ENCODE measurements at regions of chr17 and their contacts with region 1.

Region 1: GRCh38 chr17:17496189-17497064 is at the start of gene RASD1:
- DNase-seq: peak; percentile 96
- H3K4me3 ChIP-seq: peak within 1 kb of the TSS; percentile 67 to 77 (median 70)
- H3K27ac ChIP-seq: peak within 1 kb of the TSS; percentile 77 to 89 (median 85)
- H3K4me1 ChIP-seq: peaks cover 27 to 38% (median 31%) of the 10 kb centered on the region in 4 donors
- H3K27me3 ChIP-seq: no peaks in the 10 kb centered on the region
- CTCF ChIP-seq: peak; percentile 94 to 100 (median 97)
- EP300 ChIP-seq: no peak
- POLR2A ChIP-seq: peak; percentile 90
- total RNA-seq, gene RASD1: 5.0 to 17.9 (median 13.3) TPM

Region 2: DNA sequence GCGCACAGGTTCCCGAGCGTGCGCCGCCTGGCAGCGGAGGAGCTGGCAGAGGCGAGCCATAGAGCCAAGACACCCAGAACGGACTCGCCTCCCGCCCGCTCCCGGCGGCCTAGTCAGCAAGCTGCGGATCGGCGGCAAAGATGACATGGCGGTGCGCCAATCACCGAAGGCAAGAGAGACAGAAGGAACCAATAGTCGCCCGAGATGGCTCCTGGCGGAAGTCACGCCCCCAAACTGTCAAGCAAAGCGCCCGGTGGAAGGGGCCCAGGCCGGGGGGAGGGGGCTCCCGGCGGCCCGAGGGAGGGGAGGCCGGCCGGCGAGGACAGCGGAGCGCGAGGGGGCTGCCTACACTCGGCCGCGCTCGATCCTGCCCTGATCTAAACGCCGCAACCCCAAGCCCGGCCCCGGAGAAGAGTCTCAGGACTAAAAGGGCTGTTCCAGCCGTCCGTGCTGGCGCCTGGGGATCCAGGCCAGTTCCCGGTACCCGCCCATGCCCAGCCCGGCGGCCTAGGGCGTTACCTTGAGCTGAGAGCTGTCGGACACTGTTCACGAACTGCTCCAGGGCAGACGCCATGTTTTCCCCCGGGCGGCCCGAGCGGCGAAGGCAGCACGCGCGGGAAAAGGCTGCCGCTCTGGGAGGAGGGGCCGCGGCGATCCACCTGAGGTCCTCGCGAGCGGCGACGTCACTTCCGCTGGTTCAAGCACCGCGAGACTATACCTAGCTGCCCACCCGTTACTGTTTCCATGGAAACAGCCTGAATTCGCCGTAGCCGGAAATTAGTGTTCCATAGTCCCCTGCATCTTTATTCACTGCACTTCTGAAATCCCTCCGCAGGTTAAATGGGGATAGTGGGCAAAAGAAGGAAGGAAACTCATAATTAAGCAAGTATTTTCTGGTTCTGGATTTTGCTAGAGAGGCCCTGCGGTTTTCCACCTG is 215.5 kb before region 1 on chr17 and contains the start of gene COPS3:
- intact Hi-C with region 1: no loop called
- DNase-seq: peak; percentile 99
- H3K4me3 ChIP-seq: peak within 1 kb of the TSS; percentile 66 to 99 (median 82)
- H3K27ac ChIP-seq: peak within 1 kb of the TSS; percentile 91 to 100 (median 98)
- H3K4me1 ChIP-seq: peaks cover 19 to 46% (median 44%) of the 10 kb centered on the region in 4 donors
- H3K27me3 ChIP-seq: no peaks in the 10 kb centered on the region
- CTCF ChIP-seq: no peak
- EP300 ChIP-seq: no peak
- POLR2A ChIP-seq: peak; percentile 61
- total RNA-seq, gene COPS3: 49.3 to 72.6 (median 59.1) TPM

Region 3: DNA sequence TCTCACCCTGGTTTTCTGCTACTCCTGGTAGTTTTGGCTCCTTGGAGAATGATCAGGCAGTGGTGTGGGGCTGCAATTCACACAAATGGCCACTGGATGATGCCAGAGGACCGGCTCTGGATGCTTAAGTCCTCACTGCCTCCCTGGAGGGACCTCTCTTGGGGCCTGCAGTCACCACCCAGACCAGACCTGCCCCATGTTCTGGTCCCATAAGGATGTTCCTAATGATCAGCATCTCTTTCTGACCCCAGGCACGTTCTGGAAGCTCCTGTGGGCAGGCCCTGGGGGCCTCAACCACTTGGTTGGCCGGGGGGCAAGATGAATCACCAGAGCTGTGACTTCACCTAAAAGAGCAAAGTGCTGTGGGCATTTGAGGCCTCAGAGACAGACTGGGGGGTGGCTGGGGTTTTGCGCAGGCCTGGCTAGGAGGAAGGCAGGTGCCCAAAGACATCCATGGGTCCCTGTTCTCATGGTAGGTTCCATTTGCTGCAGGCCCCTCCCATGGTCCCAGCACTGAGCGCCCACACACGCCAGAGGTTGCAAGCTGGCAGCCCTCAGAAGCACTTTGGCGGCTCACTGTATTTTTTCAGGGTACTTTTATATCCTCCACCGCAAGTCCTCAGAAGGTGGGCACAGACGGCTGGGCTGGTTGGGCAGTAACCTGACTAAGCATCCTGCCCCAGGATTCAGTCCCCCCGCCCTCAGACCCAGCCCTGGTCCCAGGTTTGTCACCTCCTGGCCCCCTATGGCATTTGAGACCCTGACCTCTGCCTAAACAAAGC is 140.1 kb before region 1 on chr17:
- intact Hi-C with region 1: loop called (anchors 10 kb)
- DNase-seq: no peak
- H3K4me3 ChIP-seq: no peak overlapping the region
- H3K27ac ChIP-seq: no peak overlapping the region
- H3K4me1 ChIP-seq: peaks cover 7 to 21% (median 14%) of the 10 kb centered on the region in 4 donors
- H3K27me3 ChIP-seq: peaks cover 0 to 39% (median 2%) of the 10 kb centered on the region in 4 donors
- CTCF ChIP-seq: peak; percentile 96 to 98 (median 98)
- EP300 ChIP-seq: no peak
- POLR2A ChIP-seq: no peak

Region 4: DNA sequence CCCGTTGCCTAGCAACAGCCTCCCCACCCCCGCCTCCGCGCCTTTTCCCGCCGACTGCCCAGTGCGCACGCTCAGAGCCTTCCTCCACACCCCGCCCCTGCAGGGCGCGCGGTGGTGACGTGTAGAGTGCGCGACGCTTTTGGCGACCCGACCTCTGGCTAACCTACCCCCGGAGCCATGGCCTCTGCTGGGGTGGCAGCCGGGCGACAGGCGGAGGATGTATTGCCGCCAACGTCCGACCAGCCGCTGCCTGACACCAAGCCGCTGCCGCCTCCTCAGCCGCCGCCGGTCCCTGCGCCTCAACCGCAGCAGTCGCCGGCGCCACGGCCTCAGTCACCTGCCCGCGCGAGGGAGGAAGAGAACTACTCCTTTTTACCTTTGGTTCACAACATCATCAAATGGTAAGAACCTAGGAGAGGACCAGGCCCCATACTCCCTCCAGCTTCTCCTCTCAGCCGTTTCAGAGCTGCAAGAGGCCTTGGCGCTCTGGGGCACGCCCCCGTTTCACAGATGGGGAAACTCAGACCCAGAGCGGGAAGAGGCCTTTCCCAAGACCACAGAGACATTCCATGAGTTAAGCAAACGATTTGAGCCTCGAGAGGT is 19.5 kb before region 1 on chr17 and contains the start of gene MED9:
- intact Hi-C with region 1: loop called (anchors 2 kb)
- DNase-seq: peak; percentile 97
- H3K4me3 ChIP-seq: peak within 1 kb of the TSS; percentile 83 to 94 (median 88)
- H3K27ac ChIP-seq: peak within 1 kb of the TSS; percentile 86 to 96 (median 90)
- H3K4me1 ChIP-seq: peaks cover 45 to 54% (median 49%) of the 10 kb centered on the region in 4 donors
- H3K27me3 ChIP-seq: no peaks in the 10 kb centered on the region
- CTCF ChIP-seq: no peak
- EP300 ChIP-seq: no peak
- POLR2A ChIP-seq: no peak
- total RNA-seq, gene MED9: 8.3 to 14.4 (median 11.4) TPM

Region 5: DNA sequence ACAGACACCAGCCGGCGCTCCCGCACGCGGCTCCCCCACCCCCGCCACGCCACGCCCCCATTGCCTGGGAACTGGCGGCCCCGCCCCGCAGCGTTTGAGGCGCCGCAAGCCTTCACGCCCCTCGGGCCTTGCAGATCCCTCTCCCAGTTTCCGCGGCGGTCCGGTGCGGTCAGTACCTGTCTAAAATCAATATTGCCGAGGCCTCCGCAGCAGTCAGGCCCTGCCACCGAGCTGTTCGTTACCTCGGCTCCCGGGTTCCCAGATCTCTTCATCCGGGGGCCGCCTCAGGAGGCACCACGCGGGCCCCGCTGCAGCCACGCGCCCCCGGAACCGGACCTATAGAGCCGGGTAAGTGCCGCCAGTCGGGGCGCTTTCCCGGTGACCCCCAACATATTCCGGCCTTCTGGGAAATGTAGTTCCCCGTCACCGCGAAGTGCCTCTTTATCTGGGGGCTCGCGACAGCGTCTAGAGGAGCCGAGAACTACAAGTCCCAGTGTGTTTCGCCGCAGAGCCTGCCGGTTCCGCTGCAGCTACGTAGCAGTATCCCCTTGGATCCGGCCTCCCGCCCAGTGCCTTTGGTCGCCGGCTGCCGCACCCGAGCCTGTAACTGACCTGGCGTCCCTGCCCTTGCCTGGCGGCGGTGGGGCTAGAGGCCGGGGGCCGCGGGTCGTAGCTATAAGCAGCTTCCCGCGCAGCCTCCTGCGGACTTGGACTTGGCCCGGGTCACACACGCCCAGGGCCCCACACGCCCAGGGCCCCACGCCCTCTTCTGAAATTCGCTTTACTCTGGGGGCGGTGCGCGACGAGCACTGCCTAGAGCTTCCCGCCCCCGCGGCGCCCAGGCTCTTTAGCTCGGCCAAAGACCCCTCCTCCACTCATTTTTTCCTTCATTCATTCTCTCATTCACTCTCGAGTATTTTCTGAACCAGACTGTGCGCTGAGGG is 95.2 kb after region 1 on chr17 and contains the start of gene PEMT:
- intact Hi-C with region 1: loop called (anchors 5 kb)
- DNase-seq: peak; percentile 99
- H3K4me3 ChIP-seq: peak within 1 kb of the TSS; percentile 76 to 98 (median 83)
- H3K27ac ChIP-seq: peak within 1 kb of the TSS; percentile 81 to 92 (median 88)
- H3K4me1 ChIP-seq: peaks cover 20 to 32% (median 23%) of the 10 kb centered on the region in 4 donors
- H3K27me3 ChIP-seq: no peaks in the 10 kb centered on the region
- CTCF ChIP-seq: peak; percentile 5 to 27 (median 9)
- EP300 ChIP-seq: no peak
- POLR2A ChIP-seq: no peak
- total RNA-seq, gene PEMT: 17.7 to 24.8 (median 20.6) TPM

Region 6: DNA sequence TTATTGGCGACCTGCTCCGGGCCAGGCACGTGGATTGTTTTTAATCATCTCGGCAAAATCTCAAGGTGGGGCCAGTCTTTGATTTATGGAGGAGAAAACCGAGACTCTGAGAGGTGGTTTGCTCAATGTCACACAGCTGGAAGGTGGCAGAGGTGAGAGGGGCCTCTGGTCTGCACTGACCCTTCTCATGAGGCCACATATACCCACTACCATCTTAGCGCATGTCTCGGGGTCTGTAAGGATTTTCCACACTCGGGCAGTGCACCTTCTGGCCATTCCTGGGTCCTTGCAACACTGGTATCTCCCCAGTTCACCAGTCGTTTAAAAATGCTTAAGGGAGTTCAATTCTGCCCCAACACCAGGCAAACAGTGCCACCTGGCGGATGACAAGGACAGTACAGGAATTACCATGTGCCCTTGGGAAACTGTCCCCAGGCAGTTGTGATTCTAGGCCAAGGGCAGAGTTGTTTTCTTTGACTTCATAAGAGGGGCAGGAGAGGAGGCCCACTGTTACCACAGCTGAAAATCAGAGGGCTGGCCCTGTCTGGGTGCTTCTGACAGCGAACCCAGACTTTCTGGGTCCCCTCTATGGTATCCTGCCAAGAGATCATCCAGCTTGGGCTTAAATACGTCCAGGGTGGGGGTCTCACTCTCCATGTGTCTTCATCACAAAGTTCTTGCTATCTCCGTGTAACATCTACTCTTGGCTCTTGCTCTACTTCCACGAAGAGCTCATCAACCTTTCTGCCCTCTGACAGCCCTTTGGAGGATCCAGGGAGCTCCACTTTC is 145.4 kb after region 1 on chr17:
- intact Hi-C with region 1: loop called (anchors 5 kb)
- DNase-seq: peak; percentile 93
- H3K4me3 ChIP-seq: no peak overlapping the region
- H3K27ac ChIP-seq: no peak overlapping the region
- H3K4me1 ChIP-seq: peaks cover 0 to 6% (median 0%) of the 10 kb centered on the region in 4 donors
- H3K27me3 ChIP-seq: peaks cover 0 to 12% (median 0%) of the 10 kb centered on the region in 4 donors
- CTCF ChIP-seq: peak; percentile 88 to 95 (median 90)
- EP300 ChIP-seq: no peak
- POLR2A ChIP-seq: no peak

Measured in esophagus muscularis mucosa (tissue), 4 donors.